ENCODE measurements at regions of chr6 and their contacts with region 1.

Region 1: DNA sequence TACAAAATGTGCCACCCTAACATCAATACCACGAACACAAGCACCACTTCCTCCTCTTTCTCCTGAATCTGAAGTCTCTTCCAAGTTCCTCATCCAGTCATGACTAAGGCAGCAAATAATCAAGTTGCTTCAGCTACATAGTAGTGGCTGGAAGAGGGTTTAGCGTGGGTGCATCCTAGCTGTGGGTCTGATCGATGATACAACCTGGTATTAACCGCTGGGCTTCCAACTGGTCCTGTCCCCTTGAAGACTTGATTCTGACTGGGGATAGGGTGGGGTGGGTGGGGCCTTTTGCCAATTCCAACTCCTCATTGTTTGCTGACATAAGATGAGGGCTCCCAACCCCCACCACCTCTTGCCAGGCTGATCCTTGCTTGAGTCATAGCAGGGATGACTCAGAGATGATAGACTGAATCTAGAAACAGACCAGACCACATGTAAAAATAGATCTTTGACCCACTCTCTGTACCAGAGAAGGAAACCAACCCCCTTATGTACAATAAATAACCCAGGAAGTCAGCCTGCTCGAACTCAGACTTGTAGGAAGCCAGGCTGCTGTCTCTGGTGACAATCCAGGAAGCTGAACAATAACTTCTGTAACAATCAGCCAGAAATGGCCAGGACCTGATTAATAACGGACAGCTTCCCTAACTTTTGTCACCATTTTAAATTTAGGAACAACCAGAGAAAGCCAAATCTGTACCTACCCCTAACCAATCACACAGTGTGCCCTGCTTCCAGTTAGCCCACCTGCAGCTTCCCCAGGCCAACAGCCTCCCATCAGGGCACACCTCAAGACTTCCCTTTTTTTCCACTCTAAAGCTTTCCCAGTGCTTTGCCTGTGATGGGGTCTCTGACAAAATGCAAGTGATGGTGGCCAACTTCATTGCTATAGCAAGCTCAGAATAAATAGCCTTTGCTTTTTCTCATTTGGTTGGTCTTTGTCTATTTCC is 68.9 kb upstream of the FAM184A start:
- H3K4me3 ChIP-seq: no peak overlapping the region
- H3K27ac ChIP-seq: no peak overlapping the region; the same call in 1 of the 2 replicates
- H3K4me1 ChIP-seq: no peaks in the 10 kb centered on the region
- CTCF ChIP-seq: no peak

Region 2: GRCh38 chr6:119129148-119129967 is 18.0 kb before region 1 on chr6:
- CTCF ChIA-PET with region 1: interaction called, 32 read pairs
- POLR2A ChIA-PET with region 1: interaction called, 4 read pairs
- H3K4me3 ChIP-seq: no peak overlapping the region
- H3K27ac ChIP-seq: no peak overlapping the region
- H3K4me1 ChIP-seq: peaks cover 4% of the 10 kb centered on the region
- CTCF ChIP-seq: peak; percentile 57

Region 3: DNA sequence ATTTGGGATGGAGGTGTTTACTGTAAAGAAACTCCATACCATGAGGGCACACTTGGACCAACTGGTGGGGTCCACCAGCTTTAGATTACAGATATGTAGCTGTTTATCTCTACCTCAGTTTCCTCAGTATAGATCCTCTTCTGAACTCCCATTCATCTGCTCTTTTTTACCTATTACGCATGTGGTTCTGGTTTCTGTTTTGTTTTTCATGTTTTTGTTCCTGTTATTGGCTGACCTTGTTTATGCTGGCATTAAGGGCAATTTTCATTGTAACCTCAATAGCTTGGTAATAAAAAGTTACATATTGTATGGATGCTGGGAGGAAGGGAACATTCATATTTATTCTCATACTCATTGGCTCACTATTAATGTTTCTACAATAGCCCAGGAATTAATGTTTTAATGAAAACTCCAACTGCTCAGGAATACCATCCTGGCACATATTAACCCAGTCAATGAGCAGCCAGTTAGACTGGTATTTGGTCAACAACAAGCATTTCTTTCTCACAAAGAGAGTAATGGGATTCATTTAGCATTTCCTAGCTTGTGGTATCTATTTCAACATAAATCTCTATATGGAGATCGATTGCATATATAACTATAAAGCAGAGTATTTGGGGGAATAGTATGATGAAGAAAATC is 14.9 kb after region 1 on chr6:
- CTCF ChIA-PET with region 1: interaction called, 18 read pairs
- POLR2A ChIA-PET with region 1: interaction called, 5 read pairs
- H3K4me3 ChIP-seq: no peak overlapping the region
- H3K27ac ChIP-seq: no peak overlapping the region
- H3K4me1 ChIP-seq: no peaks in the 10 kb centered on the region
- CTCF ChIP-seq: no peak

Region 4: GRCh38 chr6:119313937-119314884 is 166.8 kb after region 1 on chr6:
- CTCF ChIA-PET with region 1: interaction called, 17 read pairs
- POLR2A ChIA-PET with region 1: no interaction called
- H3K4me3 ChIP-seq: no peak overlapping the region
- H3K27ac ChIP-seq: no peak overlapping the region
- H3K4me1 ChIP-seq: no peaks in the 10 kb centered on the region
- CTCF ChIP-seq: no peak

Region 5: GRCh38 chr6:119349323-119350042 is 202.1 kb after region 1 on chr6 and contains the start of gene MAN1A1:
- CTCF ChIA-PET with region 1: interaction called, 23 read pairs
- POLR2A ChIA-PET with region 1: interaction called, 5 read pairs
- H3K4me3 ChIP-seq: peak within 1 kb of the TSS; percentile 95
- H3K27ac ChIP-seq: peak within 1 kb of the TSS; percentile 73; the same call in 1 of the 2 replicates
- H3K4me1 ChIP-seq: no peaks in the 10 kb centered on the region
- CTCF ChIP-seq: peak; percentile 81

Region 6: DNA sequence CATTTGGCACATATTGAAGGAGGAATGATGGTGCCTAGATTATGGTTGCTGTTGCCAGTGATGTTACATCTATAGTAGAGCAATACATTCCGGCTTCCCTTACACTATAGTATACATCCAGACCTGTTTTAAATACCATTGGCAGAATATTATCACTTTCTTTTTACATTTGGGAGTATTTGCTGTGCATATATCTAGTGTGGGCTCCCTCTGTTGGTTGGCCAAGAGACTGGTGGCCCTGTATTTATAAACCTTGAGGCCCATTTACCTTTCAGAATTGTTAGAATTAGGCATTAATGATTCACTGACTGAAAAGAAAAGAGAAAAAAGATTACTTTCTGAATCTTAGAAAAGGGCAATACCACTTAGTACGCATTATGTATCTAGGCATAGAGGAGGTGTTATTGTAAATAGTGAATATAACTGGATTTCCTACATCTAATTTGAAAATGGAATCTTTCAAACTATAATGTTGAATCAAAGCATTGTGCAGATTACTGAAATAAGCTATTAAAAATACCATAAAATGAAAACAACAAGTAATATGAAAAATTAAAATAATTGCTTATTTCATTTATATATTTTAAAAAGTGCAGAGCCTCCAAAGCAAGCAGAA is 831.0 kb after region 1 on chr6:
- CTCF ChIA-PET with region 1: interaction called, 14 read pairs
- POLR2A ChIA-PET with region 1: no interaction called
- H3K4me3 ChIP-seq: no peak overlapping the region
- H3K27ac ChIP-seq: no peak overlapping the region
- H3K4me1 ChIP-seq: no peaks in the 10 kb centered on the region
- CTCF ChIP-seq: no peak